Esophagus muscularis mucosa (tissue), 4 donors: ENCODE measurements at regions of chr7 and their contacts with region 1.

Region 1: GRCh38 chr7:71733107-71733870 is 601.3 kb downstream of the GALNT17 start:
- DNase-seq: peak; percentile 95
- H3K4me3 ChIP-seq: peak overlapping the region; percentile 27 to 51 (median 39)
- H3K27ac ChIP-seq: no peak overlapping the region
- H3K4me1 ChIP-seq: peaks cover 4 to 8% (median 7%) of the 10 kb centered on the region in 4 donors
- H3K27me3 ChIP-seq: peaks cover 0 to 12% (median 0%) of the 10 kb centered on the region in 4 donors
- CTCF ChIP-seq: peak; percentile 78 to 95 (median 90)
- EP300 ChIP-seq: no peak
- POLR2A ChIP-seq: no peak

Region 2: DNA sequence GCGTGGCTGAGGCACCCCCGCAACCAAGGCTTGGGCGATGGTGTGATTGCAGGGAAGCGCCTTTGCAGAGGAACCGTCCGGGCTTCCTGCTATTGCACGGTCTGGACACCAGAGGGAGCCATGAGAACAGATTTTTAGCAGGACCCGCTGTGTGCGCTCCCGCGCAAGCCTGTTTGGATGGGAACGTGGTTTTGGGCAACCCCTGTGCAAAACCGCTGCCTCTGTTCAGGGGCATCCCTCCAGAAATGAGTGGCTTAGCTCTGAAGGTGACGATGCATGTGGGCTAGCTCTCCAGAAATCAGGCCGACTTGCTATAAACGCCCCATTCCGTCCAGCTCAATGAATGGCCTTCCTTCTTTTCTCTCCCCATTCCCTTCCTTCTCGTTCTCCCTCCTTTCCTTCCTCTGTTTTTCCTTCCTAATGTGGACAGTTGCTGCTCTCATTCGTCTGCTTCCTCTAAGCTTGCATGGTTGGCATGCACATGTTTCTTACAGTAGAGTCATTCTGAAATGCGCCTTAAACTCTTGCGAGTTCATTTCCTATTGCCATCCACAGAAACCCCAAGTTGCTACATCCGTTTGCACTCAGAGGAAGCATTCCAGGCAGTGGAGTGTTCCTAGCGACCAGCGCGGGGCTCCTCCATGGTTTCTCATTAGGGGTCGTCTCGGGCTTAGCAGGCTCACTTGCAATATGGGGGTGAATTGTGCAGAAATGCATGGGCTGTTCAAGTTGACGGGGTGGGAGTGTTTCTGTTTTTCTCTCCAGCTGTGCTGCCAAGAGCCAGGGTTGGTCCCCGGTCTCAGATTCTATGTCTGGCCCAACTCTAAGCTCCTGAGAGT is 903.8 kb before region 1 on chr7:
- intact Hi-C with region 1: loop called (anchors 1 kb)
- DNase-seq: peak; percentile 93
- H3K4me3 ChIP-seq: peak overlapping the region; percentile 10 to 40 (median 28)
- H3K27ac ChIP-seq: no peak overlapping the region
- H3K4me1 ChIP-seq: peaks cover 0 to 14% (median 9%) of the 10 kb centered on the region in 4 donors
- H3K27me3 ChIP-seq: peaks cover 0 to 19% (median 2%) of the 10 kb centered on the region in 4 donors
- CTCF ChIP-seq: peak; percentile 82 to 97 (median 93)
- EP300 ChIP-seq: no peak
- POLR2A ChIP-seq: no peak

Region 3: GRCh38 chr7:70856866-70857630 is 876.2 kb before region 1 on chr7:
- intact Hi-C with region 1: loop called (anchors 1 kb)
- DNase-seq: no peak
- H3K4me3 ChIP-seq: no peak overlapping the region
- H3K27ac ChIP-seq: no peak overlapping the region
- H3K4me1 ChIP-seq: no peaks in the 10 kb centered on the region
- H3K27me3 ChIP-seq: no peaks in the 10 kb centered on the region
- CTCF ChIP-seq: peak; percentile 78 to 95 (median 86)
- EP300 ChIP-seq: no peak
- POLR2A ChIP-seq: no peak

Region 4: DNA sequence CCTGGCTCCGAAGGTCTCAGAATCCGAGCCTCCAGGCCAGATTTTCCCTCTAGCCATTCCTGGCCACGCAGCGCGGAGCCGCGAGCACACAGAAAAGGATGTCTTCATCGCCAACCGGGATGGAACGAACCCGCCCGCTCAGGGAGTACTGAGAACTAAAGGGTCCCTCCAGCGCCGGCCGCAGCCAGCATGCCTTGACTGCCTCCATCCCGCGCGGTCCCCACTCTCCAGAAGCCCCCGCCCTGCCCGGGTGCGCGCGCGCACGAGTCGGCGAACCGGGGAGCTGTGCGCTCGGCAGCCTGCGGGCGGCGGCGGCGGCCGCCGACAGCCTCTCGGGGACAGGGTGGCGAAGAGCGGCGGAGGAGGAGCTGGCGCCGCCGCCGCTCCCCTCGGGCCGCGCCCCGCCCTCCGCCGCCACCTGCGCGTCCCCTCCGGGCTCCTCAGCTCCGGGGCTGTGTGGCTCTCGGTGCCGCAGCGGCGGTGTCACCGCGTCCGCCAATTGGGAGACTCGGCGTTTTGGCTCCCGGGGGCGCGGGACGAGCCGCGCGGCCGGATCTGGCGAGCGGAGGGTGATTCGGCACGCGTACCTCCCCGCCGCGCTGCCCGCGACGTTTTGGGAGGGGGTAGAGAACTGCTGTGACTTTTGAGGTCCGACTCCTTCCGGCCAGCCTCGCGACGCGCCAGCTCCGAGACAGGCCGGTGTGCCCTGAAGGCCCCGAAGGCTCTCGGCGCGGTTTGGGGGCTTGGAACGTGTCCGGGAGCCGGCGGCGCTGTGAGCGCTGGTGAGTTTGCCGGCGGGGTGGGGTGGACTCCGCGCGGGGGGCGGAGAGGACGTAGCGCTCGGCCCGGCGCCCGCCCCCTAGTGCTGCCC is 601.8 kb before region 1 on chr7:
- intact Hi-C with region 1: loop called (anchors 5 kb)
- DNase-seq: no peak
- H3K4me3 ChIP-seq: peak overlapping the region; percentile 79 to 86 (median 82)
- H3K27ac ChIP-seq: peak overlapping the region; percentile 81 to 90 (median 85)
- H3K4me1 ChIP-seq: peaks cover 0 to 60% (median 47%) of the 10 kb centered on the region in 4 donors
- H3K27me3 ChIP-seq: peaks cover 0 to 26% (median 0%) of the 10 kb centered on the region in 4 donors
- CTCF ChIP-seq: peak; percentile 43 to 52 (median 49)
- EP300 ChIP-seq: no peak
- POLR2A ChIP-seq: no peak

Region 5: GRCh38 chr7:71237945-71238344 is 495.3 kb before region 1 on chr7:
- intact Hi-C with region 1: loop called (anchors 10 kb)
- DNase-seq: no peak
- H3K4me3 ChIP-seq: no peak overlapping the region
- H3K27ac ChIP-seq: peak overlapping the region; percentile 81 to 87 (median 85)
- H3K4me1 ChIP-seq: peaks cover 36 to 63% (median 63%) of the 10 kb centered on the region in 4 donors
- H3K27me3 ChIP-seq: no peaks in the 10 kb centered on the region
- CTCF ChIP-seq: peak; percentile 60 to 72 (median 66)
- EP300 ChIP-seq: no peak
- POLR2A ChIP-seq: no peak